ENCODE measurements at regions of chr5 and their contacts with region 1.

Region 1: DNA sequence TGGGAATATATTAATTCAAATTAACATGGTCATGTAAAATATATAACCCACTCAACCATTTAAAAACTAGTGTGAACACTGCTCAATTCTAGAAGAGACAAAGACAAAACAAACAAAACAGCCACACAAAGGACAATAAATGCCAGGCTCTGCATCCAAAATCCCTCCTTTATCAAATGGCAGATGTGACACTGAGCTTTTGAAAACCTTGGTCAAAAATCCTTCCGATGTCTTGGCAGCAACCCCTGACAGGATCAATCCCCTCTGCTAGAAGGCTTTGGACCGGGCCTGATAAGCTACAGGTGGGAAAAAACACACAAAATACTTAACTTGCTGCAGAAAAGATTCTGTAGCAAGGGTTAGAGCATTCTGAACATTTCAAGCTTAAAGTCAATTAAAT is 61.5 kb downstream of the ZFR start:
- DNase-seq: no peak
- H3K4me3 ChIP-seq: no peak overlapping the region
- H3K27ac ChIP-seq: no peak overlapping the region
- H3K4me1 ChIP-seq: no peaks in the 10 kb centered on the region
- H3K27me3 ChIP-seq: no peaks in the 10 kb centered on the region
- CTCF ChIP-seq: no peak

Region 2: GRCh38 chr5:32276173-32276853 is 106.8 kb before region 1 on chr5:
- CTCF ChIA-PET with region 1: interaction called, 15 read pairs
- POLR2A ChIA-PET with region 1: no interaction called
- intact Hi-C with region 1: no loop called
- DNase-seq: no peak
- H3K4me3 ChIP-seq: no peak overlapping the region
- H3K27ac ChIP-seq: peak overlapping the region; percentile 23; the same call in 1 of the 2 replicates
- H3K4me1 ChIP-seq: no peaks in the 10 kb centered on the region; the same call in 1 of the 2 replicates
- H3K27me3 ChIP-seq: no peaks in the 10 kb centered on the region
- CTCF ChIP-seq: no peak

Region 3: DNA sequence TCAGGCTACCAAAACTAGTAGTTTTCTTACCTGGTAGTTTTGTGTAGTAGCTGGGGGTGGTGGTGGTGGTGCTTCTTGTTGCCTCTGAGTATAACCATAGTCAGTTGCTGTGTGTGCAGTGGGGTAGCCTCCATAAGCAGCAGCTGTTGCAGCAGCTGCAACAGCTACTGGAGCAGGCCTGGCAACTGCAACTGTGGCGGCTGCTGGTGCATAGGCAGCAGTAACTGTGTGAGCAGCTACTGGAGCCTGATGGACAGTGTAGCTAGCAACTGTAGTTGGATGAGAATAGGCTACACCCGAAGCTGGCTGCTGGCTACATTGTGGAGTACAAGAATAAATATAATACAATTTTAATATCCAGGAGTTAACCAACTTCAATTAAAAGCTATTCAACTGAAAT is 36.7 kb after region 1 on chr5:
- CTCF ChIA-PET with region 1: no interaction called
- POLR2A ChIA-PET with region 1: no interaction called
- intact Hi-C with region 1: loop called (anchors 5 kb)
- DNase-seq: no peak
- H3K4me3 ChIP-seq: no peak overlapping the region
- H3K27ac ChIP-seq: no peak overlapping the region
- H3K4me1 ChIP-seq: no peaks in the 10 kb centered on the region
- H3K27me3 ChIP-seq: no peaks in the 10 kb centered on the region
- CTCF ChIP-seq: no peak

Measured in PC-9 (cell line).